ENCODE measurements at regions of chr15 and their contacts with region 1.

Region 1: DNA sequence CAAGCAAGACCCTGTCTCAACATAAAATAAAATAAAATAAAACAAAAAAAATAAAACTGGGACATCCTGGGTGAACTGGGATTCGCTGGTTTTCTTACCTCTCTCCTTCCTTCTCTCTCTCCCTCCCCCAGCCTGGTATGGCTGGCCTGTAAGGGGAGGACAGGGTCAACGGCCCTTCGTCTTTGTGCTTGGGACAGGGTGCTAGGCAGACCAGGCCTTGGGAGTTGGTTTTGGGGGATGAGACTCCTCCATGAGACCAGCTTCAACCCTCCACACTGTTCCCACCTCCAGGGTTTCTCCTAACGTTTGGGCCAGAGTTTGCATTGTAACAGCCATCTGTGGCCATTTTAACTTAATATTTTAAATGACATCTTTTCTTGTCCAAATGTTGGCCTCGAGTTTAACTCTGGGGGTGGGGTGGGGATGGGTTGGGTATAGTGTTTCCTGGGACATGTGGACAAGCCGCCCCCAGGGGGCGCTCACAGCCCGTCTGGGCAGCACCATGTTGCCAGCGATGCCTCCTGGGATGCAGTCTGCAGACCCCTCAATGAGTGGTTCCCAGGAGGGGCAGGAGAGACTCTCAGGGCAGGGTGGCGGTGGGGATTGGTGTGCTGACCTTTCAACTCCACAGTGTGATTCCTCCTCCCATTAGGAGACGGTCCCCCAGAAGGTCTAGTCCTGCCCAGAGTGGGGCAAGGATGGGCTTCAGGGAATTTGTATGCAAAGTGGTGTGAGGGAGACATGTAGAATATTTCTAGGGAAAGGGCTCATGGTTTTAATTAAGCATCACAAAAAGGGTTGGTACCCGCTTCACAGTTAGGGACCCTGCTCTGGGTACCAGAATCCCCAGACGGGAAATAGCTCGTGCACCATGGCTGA is 37.7 kb upstream of the LCTL start:
- ATAC-seq: peak; percentile 76 to 98 (median 88)
- H3K4me3 ChIP-seq: no peak overlapping the region
- H3K27ac ChIP-seq: no peak overlapping the region
- H3K4me1 ChIP-seq: no peaks in the 10 kb centered on the region

Region 2: DNA sequence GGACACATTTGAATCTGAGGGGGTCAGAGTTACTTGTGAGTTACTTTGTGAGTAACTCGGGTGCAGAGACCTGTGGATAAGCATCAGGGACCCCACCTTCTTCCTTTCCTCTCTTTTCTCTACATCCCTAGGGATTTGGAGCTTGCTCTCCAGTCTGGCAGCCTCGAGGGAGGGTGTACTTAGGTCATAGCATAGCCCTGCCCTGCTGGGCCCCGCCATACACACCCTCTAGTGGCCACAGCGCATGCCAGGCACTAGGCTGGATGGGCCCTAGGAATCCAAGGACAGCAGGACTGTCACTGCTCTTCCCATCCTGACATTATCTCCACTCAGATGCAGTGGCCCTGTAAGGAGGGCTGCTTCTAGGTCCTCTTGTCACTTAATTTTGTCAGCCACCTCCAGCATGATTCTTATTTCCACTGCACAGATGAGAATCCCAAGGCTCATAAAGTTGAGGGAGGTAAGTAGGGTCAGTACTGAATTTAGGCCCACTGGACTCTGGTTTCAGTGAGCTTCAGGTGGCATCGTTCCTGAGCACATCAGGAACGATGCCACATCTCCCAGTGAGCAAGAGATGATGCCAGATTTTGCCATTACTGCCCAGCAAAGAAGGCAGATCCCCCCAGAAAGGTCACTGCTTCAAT is 94.9 kb after region 1 on chr15:
- in situ Hi-C with region 1: loop called in 1 of 9 experiments (anchors 10 kb)
- ATAC-seq: peak; percentile 12 to 46 (median 24)
- H3K4me3 ChIP-seq: no peak overlapping the region
- H3K27ac ChIP-seq: no peak overlapping the region
- H3K4me1 ChIP-seq: no peaks in the 10 kb centered on the region